Activated B cell treated with CpG ODN at 0.5 μM for 24 hours (primary cell): ENCODE measurements at regions of chr19 and their contacts with region 1.

Region 1: DNA sequence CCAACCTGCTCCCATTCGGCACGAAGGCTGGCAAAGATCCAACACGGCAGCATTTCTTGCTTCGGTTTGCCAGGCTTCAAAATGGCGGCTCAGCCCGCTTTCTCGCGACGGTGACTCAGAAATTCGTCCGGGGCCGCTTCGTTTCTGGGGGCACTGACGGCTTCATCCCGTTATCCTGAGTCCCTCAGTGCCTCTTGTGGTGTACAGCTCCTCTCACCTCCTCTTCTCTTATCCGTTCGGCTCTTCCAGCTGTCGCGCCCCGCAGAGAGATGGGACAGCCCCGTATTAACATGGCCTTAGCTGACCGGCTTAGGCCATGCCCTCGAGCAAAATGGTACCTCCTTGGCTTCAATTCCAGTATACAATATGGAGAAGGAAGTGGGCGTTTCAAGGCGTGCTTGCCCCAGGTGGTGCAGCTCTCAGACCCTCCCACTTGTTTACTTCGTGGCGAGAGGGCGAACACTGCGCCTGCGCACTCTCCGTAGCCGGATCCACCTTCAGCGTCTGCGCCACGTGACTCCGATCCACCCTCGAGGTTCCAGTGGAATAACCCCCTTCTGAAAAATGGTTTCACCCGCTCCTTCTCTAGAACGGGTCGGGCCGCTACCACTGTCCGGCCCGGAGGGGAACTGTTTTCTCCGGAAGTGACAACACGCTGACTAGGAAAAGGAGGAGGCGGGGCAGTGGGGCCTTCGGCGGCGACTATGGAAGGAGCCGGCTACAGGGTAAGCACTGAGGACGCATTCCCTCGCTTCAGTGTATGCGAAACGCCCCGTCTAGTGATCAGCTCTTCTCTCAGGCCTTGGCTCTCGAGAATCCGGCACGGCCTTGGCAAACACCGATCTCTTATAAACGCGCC is at the starts of genes AKT1S1 and TBC1D17:
- DNase-seq: peak; percentile 94
- ATAC-seq: peak; percentile 68
- H3K4me3 Mint-ChIP-seq: no peak within 1 kb of the TSS
- H3K27ac Mint-ChIP-seq: no peak within 1 kb of the TSS
- H3K4me1 Mint-ChIP-seq: peaks cover 25% of the 10 kb centered on the region
- H3K27me3 Mint-ChIP-seq: no peaks in the 10 kb centered on the region
- CTCF ChIP-seq: no peak
- total RNA-seq, gene AKT1S1: 21.3 and 28.7 TPM in 2 replicates
- total RNA-seq, gene TBC1D17: 51.1 and 57.0 TPM in 2 replicates

Region 2: GRCh38 chr19:49118565-49119410 is 758.5 kb before region 1 on chr19 and contains the start of gene C19orf73:
- CTCF ChIA-PET with region 1: no interaction called
- POLR2A ChIA-PET with region 1: no interaction called
- intact Hi-C with region 1: loop called (anchors 10 kb)
- DNase-seq: peak; percentile 96
- ATAC-seq: peak; percentile 82
- H3K4me3 Mint-ChIP-seq: peak within 1 kb of the TSS; percentile 84
- H3K27ac Mint-ChIP-seq: peak within 1 kb of the TSS; percentile 87
- H3K4me1 Mint-ChIP-seq: peaks cover 44% of the 10 kb centered on the region
- H3K27me3 Mint-ChIP-seq: peaks cover 7% of the 10 kb centered on the region
- CTCF ChIP-seq: no peak
- total RNA-seq, gene C19orf73: 0.98 and 1.0 TPM in 2 replicates

Region 3: GRCh38 chr19:49590071-49590970 is 286.9 kb before region 1 on chr19:
- CTCF ChIA-PET with region 1: no interaction called
- POLR2A ChIA-PET with region 1: no interaction called
- intact Hi-C with region 1: loop called (anchors 5 kb)
- DNase-seq: peak; percentile 96
- ATAC-seq: peak; percentile 81
- H3K4me3 Mint-ChIP-seq: peak overlapping the region; percentile 85
- H3K27ac Mint-ChIP-seq: peak overlapping the region; percentile 89
- H3K4me1 Mint-ChIP-seq: peaks cover 34% of the 10 kb centered on the region
- H3K27me3 Mint-ChIP-seq: no peaks in the 10 kb centered on the region
- CTCF ChIP-seq: no peak

Region 4: DNA sequence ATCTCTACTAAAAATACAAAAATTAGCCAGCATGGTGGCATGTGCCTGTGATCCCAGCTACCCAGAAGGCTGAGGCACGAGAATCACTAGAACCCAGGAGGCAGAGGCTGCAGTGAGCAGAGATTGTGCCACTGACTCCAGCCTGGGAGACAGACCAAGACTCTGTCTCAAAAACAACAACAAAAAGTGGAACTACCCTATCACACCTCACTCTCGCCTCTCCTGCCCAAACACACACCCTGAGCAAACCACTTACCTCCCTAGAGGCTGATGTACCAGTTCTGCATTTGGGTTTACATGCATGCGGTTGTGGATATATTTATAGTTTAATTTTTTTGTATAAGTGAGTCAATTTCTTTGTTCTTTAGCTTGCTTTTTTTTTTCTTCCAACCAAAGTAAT is 34.0 kb before region 1 on chr19:
- CTCF ChIA-PET with region 1: no interaction called
- POLR2A ChIA-PET with region 1: interaction called, 14 read pairs
- intact Hi-C with region 1: no loop called
- DNase-seq: no peak
- ATAC-seq: peak; percentile 97
- H3K4me3 Mint-ChIP-seq: peak overlapping the region; percentile 68
- H3K27ac Mint-ChIP-seq: peak overlapping the region; percentile 82
- H3K4me1 Mint-ChIP-seq: peaks cover 45% of the 10 kb centered on the region
- H3K27me3 Mint-ChIP-seq: no peaks in the 10 kb centered on the region
- CTCF ChIP-seq: no peak

Region 5: DNA sequence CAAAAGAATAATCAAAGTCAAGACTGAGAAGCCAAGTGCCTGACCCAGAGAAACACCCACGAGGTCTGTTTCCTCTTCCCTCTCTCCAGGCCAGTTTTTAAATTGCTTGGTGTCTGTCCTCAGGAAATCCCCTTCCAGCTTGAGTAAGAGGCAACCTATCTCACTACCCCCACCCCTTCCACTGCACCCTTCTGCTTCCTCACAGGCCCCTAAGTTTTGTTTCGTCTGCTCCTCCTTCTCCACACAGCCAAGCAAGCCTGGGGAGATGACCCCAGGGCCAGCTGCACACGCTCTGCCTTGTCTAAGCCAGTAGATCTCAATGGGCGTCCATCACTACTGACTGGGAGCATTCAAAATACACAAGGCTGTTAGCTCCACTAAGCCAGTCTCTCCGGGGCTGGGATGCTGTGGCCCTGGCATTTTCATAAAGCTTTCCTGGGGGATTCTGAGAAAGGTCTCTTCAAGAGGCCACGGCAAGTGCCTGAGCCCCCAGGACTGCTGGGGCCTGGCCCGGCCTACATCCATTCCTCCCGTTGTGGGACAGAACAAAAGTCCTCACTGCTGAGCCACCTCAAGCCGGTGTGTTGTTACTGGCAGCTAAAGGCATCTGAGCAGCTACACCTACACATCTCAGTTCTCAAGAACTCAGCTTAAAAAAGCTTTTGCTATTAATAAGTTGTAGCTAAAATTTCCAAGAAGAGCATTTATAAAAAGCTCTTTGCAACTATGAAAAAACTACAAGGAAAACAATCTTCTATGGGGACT is 34.3 kb after region 1 on chr19:
- CTCF ChIA-PET with region 1: no interaction called
- POLR2A ChIA-PET with region 1: interaction called, 16 read pairs
- intact Hi-C with region 1: no loop called
- DNase-seq: no peak
- ATAC-seq: peak; percentile 80
- H3K4me3 Mint-ChIP-seq: peak overlapping the region; percentile 68
- H3K27ac Mint-ChIP-seq: peak overlapping the region; percentile 89
- H3K4me1 Mint-ChIP-seq: peaks cover 76% of the 10 kb centered on the region
- H3K27me3 Mint-ChIP-seq: no peaks in the 10 kb centered on the region
- CTCF ChIP-seq: no peak

Region 6: DNA sequence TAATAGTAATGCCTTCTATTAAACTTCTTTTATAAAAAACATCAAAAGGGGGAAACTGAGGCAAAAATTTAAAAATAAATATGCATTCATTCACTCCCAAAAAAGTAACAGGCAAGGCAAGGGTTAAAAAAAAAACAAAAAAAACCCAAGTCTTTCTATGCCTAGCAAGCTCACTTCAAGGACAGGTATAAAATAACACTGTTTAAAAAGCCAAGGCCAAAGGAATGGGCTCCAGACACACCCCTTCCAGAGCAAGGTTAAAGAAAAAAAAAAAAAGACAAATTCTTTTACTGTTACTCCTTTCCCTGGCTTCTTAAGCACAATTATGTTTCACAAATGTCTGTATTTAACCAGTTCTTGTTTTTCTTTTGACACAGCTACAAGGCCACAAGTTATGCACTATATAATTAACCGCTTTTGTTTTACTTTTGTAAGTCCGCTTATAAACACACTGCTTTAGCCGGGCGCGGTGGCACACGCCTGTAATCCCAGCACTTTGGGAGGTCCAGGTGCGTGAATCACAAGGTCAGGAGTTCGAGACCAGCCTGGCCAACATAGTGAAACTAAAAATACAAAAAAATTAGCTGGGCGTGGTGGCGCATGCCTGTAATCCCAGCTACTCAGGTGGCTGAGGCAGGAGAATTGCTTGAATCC is 80.1 kb after region 1 on chr19:
- CTCF ChIA-PET with region 1: no interaction called
- POLR2A ChIA-PET with region 1: no interaction called
- intact Hi-C with region 1: no loop called
- DNase-seq: no peak
- ATAC-seq: no peak
- H3K4me3 Mint-ChIP-seq: no peak overlapping the region
- H3K27ac Mint-ChIP-seq: no peak overlapping the region
- H3K4me1 Mint-ChIP-seq: peaks cover 16% of the 10 kb centered on the region
- H3K27me3 Mint-ChIP-seq: peaks cover 18% of the 10 kb centered on the region
- CTCF ChIP-seq: no peak

Region 7: DNA sequence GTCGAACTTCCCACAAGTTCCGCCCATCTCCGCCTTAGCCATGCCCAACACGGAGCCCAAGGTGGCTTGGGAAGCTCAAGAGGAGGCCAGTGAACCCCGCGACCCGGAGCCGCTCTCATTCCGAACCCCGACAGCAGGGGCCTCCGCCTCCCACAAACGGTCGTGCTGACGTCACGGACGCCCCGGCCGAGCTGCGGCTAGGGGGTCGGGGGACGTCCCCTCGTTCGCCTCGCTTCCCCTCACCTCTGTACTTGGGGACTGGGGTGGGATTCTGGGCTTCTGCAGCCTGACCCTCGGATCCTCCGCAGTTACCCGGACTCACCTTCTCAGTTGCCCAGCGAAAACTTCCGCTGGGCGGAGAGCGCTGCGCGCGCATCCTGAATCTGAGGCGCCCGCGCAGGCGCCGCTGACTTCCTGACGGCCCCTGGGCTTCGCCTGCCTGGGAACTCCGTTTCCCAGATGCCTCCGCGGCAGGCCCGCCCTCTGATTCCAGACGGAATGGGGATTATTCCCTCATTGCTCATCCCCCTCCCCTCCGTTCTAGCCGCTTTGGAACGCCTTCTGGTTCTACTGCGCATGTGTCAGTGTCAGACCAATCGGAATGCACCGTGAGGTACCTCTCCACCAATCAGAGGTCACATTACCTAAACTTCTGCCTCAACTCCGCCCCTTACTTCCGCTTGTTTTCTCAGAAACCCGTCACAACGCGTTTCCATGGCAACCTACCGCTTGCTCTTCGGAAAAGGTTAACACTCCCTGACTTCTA is 148.0 kb after region 1 on chr19 and contains the start of gene VRK3:
- CTCF ChIA-PET with region 1: no interaction called
- POLR2A ChIA-PET with region 1: interaction called, 4 read pairs
- intact Hi-C with region 1: loop called (anchors 1 kb)
- DNase-seq: peak; percentile 95
- ATAC-seq: peak; percentile 87
- H3K4me3 Mint-ChIP-seq: peak within 1 kb of the TSS; percentile 97
- H3K27ac Mint-ChIP-seq: peak within 1 kb of the TSS; percentile 100
- H3K4me1 Mint-ChIP-seq: peaks cover 46% of the 10 kb centered on the region
- H3K27me3 Mint-ChIP-seq: no peaks in the 10 kb centered on the region
- CTCF ChIP-seq: no peak
- total RNA-seq, gene VRK3: 71.1 and 82.6 TPM in 2 replicates

Region 8: DNA sequence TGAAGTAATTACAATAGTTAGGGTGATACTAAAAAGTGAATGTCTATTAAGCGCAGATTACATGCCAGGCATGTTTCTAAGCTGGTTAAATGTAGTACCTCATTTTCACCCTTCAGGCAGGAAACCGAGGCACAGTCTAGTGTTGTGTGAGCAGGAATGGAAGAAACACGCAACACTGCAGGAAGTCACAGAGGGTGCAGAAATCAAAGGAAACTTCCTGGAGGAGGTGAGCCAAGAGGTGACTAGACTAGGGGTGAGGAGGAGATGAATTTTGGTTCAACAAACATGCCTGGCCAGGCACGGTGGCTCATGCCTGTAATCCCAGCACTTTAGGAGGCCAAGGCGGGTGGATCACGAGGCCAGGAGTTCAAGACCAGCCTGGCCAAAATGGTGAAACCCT is 190.3 kb after region 1 on chr19:
- CTCF ChIA-PET with region 1: no interaction called
- POLR2A ChIA-PET with region 1: no interaction called
- intact Hi-C with region 1: no loop called
- DNase-seq: no peak
- ATAC-seq: no peak
- H3K4me3 Mint-ChIP-seq: no peak overlapping the region
- H3K27ac Mint-ChIP-seq: no peak overlapping the region
- H3K4me1 Mint-ChIP-seq: no peaks in the 10 kb centered on the region
- H3K27me3 Mint-ChIP-seq: peaks cover 5% of the 10 kb centered on the region
- CTCF ChIP-seq: no peak